ENCODE measurements at regions of chr7 and their contacts with region 1.

Region 1: DNA sequence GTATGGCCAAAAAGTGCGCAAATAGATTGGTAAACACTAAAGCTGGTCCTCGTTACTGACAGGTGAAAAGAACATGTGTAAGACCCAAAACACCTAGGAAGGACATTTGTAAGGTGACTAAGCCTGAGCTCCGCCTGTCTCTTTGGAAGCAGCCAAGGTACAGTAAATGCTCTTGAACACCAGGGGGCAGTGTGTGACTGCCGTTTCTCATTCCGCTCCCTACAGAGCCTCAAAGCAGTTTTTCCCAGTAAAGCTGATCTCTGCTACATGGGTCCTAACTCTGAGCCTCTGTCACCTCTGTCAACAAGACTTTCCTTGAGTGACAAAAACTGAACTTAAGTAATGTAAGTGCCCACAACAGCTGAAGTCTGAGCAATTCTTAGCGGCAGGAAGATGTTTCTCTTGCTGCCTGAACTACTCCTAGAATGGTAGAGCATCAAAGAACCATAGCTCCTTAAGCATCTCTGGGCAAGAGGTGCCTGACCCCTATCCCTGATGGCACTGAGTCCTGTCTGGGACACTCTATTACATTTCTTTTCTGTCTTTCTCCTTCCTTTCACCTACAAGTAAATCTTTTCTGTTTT is 238.0 kb upstream of the INHBA start:
- DNase-seq: peak; percentile 86
- H3K4me3 Mint-ChIP-seq: no peak overlapping the region
- H3K27ac Mint-ChIP-seq: no peak overlapping the region
- H3K4me1 Mint-ChIP-seq: peaks cover 10% of the 10 kb centered on the region
- H3K27me3 Mint-ChIP-seq: no peaks in the 10 kb centered on the region
- CTCF ChIP-seq: peak; percentile 79

Region 2: GRCh38 chr7:41206267-41206666 is 734.6 kb before region 1 on chr7:
- CTCF ChIA-PET with region 1: no interaction called
- POLR2A ChIA-PET with region 1: no interaction called
- intact Hi-C with region 1: no loop called
- DNase-seq: no peak
- H3K4me3 Mint-ChIP-seq: no peak overlapping the region
- H3K27ac Mint-ChIP-seq: no peak overlapping the region
- H3K4me1 Mint-ChIP-seq: no peaks in the 10 kb centered on the region
- H3K27me3 Mint-ChIP-seq: no peaks in the 10 kb centered on the region
- CTCF ChIP-seq: no peak

Region 3: DNA sequence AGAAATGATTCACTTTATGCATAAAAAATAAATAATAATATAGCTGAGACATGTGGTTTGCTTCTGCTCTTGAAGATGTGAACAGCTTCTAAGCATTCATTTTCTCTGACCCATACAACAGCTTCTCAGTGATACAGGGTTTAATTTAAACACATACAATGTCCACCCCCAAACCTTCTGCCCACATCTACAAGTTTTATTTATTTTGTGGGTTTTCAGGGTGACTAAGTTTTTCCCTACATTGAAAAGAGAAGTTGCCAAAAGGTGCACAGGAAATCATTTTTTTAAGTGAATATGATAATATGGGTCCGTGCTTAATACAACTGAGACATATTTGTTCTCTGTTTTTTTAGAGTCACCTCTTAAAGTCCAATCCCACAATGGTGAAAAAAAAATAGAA is 255.2 kb before region 1 on chr7:
- CTCF ChIA-PET with region 1: no interaction called
- POLR2A ChIA-PET with region 1: no interaction called
- intact Hi-C with region 1: no loop called
- DNase-seq: peak; percentile 21
- H3K4me3 Mint-ChIP-seq: no peak overlapping the region
- H3K27ac Mint-ChIP-seq: no peak overlapping the region
- H3K4me1 Mint-ChIP-seq: no peaks in the 10 kb centered on the region
- H3K27me3 Mint-ChIP-seq: no peaks in the 10 kb centered on the region
- CTCF ChIP-seq: no peak

Region 4: DNA sequence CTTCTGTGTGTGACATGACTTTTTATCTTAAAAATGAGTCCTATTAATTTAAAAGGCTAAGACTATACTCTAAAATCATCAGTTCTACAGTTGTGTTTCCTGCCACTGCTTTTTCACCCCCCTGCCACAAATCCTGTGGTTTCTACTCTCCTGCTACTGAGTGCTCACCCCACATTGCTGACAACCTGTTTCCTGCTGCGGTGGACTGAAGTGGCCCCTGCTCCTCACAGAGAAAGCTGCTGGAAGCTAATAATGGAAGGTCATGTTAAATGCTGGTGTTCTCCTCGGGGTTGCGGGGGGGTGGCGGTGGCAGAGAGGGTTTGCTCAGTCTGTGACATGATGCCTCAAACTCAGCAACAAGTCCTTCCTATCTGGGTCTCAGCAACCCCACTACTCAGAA is 124.7 kb before region 1 on chr7:
- CTCF ChIA-PET with region 1: no interaction called
- POLR2A ChIA-PET with region 1: no interaction called
- intact Hi-C with region 1: no loop called
- DNase-seq: no peak
- H3K4me3 Mint-ChIP-seq: no peak overlapping the region
- H3K27ac Mint-ChIP-seq: no peak overlapping the region
- H3K4me1 Mint-ChIP-seq: no peaks in the 10 kb centered on the region
- H3K27me3 Mint-ChIP-seq: no peaks in the 10 kb centered on the region
- CTCF ChIP-seq: no peak

Region 5: DNA sequence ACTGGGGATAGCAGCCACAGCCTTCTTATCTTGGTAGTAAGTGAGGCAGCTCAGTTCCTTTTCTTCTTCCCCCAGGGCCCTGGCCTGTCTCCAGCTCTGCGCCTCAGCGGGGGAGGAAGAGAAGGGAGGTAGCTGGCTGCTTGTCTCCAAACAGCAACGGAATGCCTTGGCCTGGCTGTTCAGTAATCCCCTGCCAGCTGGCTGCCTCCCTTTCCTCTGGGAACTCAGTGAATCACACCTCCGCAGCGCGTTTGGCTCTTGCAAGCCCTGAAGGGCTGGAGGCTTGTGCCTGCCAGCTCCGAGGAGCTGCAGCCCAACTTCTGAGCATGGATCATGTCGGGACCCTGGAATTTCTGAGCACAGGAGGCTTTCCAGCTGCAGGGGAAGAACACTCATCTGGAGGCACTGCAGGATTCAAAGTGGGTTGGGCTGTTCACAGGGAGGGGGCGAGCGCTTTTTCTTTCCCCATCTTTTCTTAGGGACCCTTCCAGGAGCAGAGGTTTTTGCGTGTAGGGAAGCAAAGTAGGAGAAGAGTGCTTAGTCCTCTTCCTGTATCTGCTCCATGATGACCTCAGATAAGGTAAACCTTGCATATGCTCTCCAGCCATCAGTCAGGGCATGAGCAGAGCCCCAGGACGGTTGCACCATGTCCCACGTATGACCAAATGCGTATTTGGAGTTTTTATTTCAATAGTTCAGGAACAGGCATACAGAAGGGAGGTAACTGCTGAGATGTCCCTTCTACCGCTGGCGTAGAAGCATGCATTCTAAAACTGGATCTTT is 15.2 kb after region 1 on chr7:
- CTCF ChIA-PET with region 1: interaction called, 74 read pairs
- POLR2A ChIA-PET with region 1: interaction called, 5 read pairs
- intact Hi-C with region 1: no loop called
- DNase-seq: peak; percentile 99
- H3K4me3 Mint-ChIP-seq: peak overlapping the region; percentile 53
- H3K27ac Mint-ChIP-seq: peak overlapping the region; percentile 37
- H3K4me1 Mint-ChIP-seq: peaks cover 33% of the 10 kb centered on the region
- H3K27me3 Mint-ChIP-seq: no peaks in the 10 kb centered on the region
- CTCF ChIP-seq: no peak

Region 6: DNA sequence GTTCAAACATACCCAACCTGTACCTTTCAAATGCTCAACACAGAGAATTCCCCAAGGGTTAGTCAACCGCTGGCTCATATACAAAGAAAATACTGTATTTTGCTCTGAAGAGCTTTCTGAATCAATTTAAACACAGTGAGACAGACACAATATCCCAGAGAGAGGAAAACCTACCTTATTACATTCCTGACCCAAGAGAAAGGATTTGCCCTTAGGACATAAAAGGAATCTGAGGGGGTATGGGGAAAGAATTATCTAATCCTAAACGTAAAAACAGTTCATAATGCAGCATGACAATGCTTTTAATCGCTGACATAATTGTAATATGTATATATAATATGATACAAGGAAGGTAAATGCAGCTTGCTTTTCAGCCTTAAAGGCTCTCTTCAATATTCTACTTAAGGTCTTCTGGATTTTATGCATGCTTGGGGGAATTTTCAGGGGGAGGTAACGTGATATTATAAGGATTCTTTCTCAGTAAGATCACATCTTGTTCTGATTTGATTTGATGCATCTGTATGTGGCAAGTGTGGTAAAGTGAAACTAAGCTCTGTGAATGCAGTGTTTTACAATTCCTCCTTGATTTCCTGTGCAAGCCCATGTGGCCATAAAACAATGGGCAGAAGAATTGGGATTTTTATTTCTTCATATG is 55.7 kb after region 1 on chr7:
- CTCF ChIA-PET with region 1: interaction called, 10 read pairs
- POLR2A ChIA-PET with region 1: no interaction called
- intact Hi-C with region 1: no loop called
- DNase-seq: peak; percentile 74
- H3K4me3 Mint-ChIP-seq: peak overlapping the region; percentile 60
- H3K27ac Mint-ChIP-seq: peak overlapping the region; percentile 74
- H3K4me1 Mint-ChIP-seq: peaks cover 48% of the 10 kb centered on the region
- H3K27me3 Mint-ChIP-seq: no peaks in the 10 kb centered on the region
- CTCF ChIP-seq: no peak

Region 7: DNA sequence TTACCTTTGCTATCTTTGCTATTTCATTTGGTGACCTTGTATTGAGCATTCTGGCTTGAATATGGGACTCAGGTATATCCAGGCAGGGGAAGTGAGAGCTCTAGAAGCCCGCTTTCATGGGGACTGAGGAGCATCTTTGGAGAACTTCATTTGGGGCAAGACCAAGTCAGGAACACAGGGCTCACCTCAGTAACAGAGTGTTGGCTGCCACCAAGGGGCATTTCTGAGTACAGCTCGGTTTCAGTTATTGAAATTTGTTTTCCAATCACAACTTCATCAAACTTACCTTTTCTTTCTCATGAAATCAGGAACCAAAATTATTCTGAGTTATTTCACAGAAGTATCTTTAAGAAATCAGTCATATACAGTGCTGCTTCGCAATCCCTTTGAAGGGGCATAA is 633.8 kb after region 1 on chr7:
- CTCF ChIA-PET with region 1: interaction called, 11 read pairs
- POLR2A ChIA-PET with region 1: no interaction called
- intact Hi-C with region 1: loop called (anchors 1 kb)
- DNase-seq: peak; percentile 31
- H3K4me3 Mint-ChIP-seq: no peak overlapping the region
- H3K27ac Mint-ChIP-seq: no peak overlapping the region
- H3K4me1 Mint-ChIP-seq: peaks cover 15% of the 10 kb centered on the region
- H3K27me3 Mint-ChIP-seq: no peaks in the 10 kb centered on the region
- CTCF ChIP-seq: peak; percentile 43

Region 8: DNA sequence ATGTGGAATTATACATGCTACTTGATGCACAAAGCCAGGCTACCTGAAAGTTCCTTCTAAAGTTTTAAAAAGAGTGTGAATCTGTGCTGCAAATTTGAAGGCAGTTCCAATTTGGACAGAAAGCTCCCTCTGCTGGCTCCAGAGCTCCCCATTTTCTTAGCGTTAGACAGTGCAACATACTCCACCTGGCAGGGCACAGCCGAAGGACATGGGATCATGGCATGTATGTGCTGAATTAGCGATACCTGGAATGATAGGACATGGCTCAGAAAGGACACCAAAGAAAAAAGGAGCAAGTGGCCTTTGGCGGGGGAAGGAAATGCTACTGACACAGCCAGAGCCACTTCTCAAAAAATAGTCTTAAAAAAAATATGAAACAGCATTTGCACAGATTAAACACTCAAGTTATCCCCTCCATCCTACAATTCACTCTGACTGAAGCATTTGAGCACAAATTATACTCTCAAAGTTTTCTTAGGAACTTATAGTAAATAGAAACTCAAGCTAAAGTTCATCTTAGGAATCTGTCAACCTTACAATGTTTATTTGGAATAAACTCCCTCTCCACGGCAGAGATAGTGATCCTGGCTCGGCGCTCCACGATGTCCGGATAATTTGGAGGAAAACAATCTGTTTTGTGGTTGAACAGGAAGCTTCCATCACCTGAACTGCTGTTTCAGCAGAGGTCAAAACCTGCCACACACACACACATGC is 891.0 kb after region 1 on chr7:
- CTCF ChIA-PET with region 1: interaction called, 121 read pairs
- POLR2A ChIA-PET with region 1: interaction called, 5 read pairs
- intact Hi-C with region 1: loop called (anchors 1 kb)
- DNase-seq: peak; percentile 61
- H3K4me3 Mint-ChIP-seq: no peak overlapping the region
- H3K27ac Mint-ChIP-seq: no peak overlapping the region
- H3K4me1 Mint-ChIP-seq: peaks cover 16% of the 10 kb centered on the region
- H3K27me3 Mint-ChIP-seq: no peaks in the 10 kb centered on the region
- CTCF ChIP-seq: peak; percentile 61

Region 9: DNA sequence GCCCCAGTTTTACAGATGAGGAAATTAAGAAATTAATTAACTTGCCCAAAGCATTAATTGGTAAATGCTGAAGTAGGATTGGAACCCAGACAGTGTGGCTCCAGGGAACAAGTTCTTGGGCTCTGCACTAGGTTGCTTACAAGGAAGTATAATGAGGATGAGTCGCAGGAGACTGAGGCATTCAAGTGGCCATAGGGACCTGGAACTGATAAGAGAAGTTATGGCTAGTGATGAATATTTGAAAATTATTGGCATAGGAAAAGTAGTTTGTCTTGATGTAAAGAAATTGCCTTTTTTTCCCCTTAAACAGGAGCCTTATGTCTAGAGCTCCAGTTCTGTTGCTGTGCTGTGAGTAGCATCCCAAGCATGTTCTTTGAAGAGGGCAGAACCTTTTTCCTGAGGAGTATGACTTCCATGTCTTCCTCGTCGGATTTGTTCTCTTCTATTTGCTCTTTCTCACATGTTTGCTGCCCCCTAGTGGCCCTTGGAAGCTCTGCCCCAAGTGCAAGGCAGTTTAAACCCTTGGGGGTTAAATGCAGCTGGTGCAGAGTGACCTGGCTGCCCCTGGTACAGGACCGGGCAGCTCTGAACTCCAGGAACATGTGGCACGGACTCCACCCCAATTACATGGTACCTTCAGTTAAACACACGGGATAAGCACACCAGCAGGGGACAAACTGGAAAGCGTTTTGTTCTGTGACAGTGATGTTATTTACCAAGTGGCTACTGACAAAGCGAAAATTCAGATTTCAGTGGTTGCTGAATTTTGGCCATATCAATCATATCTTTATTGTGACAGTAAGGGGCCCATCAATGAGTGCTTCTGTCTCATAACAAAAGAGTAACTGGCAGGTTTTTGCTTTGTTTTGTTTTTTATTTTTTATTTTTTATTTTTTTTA is 1320.4 kb after region 1 on chr7:
- CTCF ChIA-PET with region 1: interaction called, 4 read pairs
- POLR2A ChIA-PET with region 1: no interaction called
- intact Hi-C with region 1: loop called (anchors 5 kb)
- DNase-seq: peak; percentile 86
- H3K4me3 Mint-ChIP-seq: no peak overlapping the region
- H3K27ac Mint-ChIP-seq: no peak overlapping the region
- H3K4me1 Mint-ChIP-seq: no peaks in the 10 kb centered on the region
- H3K27me3 Mint-ChIP-seq: no peaks in the 10 kb centered on the region
- CTCF ChIP-seq: peak; percentile 90

Measured in MCF 10A (cell line).